Cardiac septum (tissue), 1 donor: ENCODE measurements at regions of chr2 and their contacts with region 1.

Region 1: GRCh38 chr2:222753251-222753824 is 81.9 kb downstream of the MOGAT1 start:
- DNase-seq: no peak

Region 2: DNA sequence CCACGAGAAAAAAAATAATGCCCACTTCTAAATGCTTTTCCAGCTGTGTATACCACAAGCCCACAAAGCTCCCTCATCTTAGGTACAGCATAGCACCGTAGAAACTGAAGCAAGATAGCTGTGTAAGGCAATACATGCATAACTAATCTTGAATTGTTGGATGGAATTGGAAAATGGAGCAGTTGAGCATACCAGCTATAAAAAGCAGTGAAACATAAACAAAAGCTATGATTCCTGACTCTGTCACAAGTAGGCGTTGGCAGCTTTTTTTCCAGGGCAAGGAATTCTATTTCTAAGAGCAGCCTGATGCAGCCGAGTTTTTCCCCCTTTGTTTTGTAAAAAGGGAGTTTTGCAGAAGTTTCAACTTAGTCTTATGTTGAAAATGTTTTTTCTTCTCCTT is 49.5 kb before region 1 on chr2:
- intact Hi-C with region 1: no loop called
- DNase-seq: no peak

Region 3: DNA sequence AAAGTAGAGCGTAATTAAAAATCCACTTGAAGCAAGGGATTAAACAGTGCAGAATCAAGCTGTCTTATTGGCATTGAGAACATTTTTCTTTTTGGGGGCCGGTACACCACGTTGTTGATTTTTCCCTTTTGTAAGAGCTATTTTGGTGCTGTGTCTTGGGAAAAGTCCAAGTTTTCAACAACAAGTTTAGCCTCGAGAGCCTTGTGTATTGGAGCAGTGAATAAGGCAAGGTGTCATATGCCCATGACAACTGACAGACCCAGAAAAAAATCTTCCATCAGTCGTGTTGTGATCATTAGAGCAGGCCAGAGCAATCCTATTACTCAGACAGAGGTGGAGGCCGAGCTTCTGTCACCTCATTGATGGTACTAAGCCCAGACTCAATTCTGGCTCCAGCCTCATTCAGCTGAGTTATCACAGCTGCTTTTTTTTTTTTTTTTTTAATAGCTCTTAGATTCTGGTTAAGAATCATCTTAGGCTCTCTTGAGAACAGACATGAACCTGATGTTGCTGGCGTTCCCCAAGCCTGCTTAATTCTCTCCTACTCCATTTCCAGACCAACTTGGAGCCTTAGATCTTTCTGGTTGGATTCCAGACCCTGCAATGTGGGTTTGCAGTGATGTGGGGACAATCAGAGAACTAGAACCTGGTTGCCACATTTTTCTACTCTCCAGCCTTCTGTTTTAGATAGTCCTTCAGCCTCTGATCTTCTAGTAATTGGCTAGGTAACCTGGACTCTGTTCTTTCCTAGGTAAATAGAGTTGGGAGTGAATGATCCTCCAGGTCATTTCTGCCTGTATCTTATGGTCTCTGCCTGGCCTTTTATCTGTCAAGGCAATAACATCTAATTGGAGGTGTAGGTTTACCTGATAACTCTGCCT is 38.7 kb before region 1 on chr2:
- intact Hi-C with region 1: loop called (anchors 5 kb)
- DNase-seq: no peak

Region 4: DNA sequence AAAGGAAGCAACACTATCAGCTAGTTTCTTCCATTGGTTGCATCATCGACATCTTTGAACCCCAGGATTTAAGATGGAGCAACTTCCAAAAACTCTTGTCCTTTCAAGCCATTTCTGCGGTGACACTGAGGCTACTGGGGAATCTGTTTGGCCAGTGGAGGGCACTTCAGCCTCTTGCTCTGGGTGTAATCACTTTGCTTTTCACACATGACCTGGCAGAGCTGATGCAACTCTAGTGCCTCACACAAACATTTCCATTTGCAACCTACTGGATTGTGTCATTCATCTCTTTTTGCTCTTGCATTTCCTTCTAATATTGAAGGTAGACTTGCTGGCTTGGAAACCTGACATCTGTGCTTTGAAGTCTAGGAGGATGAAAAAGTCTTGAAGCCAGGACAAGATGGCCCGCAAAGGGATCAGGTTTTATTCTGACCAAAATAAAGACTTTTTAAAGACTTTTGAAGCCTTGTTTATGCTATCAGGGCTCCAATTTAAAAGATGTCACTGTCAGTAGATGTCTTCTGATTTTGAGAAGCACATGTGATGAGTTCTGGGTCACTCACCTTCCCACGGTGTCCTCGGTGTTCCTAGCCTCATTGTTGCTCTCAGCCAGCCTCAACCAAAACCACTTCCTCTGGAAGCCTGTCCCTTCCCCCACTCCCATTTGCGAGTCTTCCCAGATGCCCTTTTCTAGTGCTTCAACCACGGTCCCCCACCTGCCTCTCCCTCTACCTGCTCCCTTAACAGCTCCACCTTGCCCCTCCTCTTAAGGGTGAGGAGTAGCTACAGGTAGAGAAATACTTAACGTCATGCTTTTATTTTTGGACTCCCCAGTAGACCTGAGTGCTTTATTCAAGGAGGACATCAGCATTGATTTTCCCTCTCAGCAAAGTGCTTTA is 228.9 kb after region 1 on chr2:
- intact Hi-C with region 1: no loop called
- DNase-seq: no peak

Region 5: GRCh38 chr2:222998459-222998858 is 245.1 kb after region 1 on chr2:
- intact Hi-C with region 1: no loop called
- DNase-seq: no peak

Region 6: DNA sequence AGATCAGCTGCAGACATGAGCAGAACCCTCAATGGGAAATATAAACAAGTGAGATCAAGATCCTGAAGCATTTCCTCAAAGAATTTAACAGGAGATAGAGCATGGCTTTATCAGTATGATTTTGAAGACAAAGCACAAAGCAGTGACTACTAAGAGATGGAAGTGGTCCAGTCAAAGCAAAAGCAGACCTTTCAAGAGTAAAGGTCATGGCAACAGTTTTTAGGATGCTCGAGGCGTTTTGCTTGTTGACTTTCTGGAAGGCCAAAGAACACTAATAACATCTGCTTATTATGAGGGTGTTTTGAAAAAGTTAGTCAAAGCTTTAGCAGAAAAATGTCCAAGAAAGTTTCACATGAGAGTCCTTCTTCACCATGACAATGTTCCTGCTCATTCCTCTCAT is 427.1 kb after region 1 on chr2:
- intact Hi-C with region 1: no loop called
- DNase-seq: no peak